ENCODE measurements at regions of chr12 and their contacts with region 1.

Region 1: DNA sequence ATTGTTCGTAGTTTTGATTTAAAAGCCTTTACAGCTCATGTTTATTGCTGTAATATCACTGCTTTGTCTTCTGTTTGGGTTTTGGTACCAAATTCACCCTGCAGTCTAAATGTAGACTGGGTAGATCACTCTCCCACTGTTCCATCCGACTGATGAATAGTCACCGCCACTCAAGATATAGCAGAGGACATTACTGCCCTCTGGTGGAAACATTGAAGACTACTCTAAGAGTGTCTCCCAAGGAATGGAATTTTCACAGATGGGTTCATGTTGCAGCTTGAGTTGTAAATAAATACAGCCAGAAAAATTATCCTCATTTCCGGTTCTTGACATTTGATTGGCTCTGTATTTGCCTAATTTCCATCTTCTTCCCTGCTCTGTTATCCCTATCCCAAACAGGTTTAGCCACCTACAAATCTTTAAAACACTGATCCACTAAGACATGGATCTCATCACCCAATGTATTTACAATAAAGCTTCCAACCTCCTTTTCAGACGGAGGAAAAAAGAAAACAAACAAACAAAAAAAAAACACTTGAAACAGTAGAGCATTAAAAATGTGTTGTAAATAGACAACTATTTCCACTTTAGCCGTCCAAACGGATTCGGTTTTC is 198.3 kb upstream of the CPNE8 start:
- DNase-seq: peak; percentile 83
- H3K4me3 ChIP-seq: no peak overlapping the region
- H3K27ac ChIP-seq: no peak overlapping the region
- H3K4me1 ChIP-seq: no peaks in the 10 kb centered on the region
- H3K27me3 ChIP-seq: no peaks in the 10 kb centered on the region
- CTCF ChIP-seq: peak; percentile 83

Region 2: GRCh38 chr12:38586652-38587243 is 516.9 kb before region 1 on chr12:
- CTCF ChIA-PET with region 1: no interaction called
- POLR2A ChIA-PET with region 1: no interaction called
- intact Hi-C with region 1: loop called (anchors 10 kb)
- DNase-seq: no peak
- H3K4me3 ChIP-seq: no peak overlapping the region
- H3K27ac ChIP-seq: no peak overlapping the region
- H3K4me1 ChIP-seq: no peaks in the 10 kb centered on the region
- H3K27me3 ChIP-seq: no peaks in the 10 kb centered on the region
- CTCF ChIP-seq: no peak

Region 3: DNA sequence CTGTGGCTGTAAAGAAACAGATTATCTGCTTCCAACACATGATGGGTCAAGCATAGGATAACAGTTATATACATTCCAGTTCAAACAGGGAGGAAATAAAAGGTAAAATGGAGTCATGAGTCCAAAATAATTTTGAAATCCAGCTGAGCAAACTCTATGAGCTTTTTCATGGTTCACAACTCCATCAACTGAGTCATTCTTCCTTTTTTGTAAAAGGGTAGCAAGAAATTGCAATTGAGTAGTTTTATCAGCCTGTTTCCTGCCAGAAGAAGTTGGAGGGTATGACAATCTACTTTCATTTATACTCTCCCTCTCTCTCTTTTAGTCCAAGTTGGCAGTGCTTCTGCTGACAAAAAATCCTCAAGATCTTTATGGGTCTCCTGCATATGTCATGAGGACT is 293.8 kb before region 1 on chr12:
- CTCF ChIA-PET with region 1: no interaction called
- POLR2A ChIA-PET with region 1: no interaction called
- intact Hi-C with region 1: no loop called
- DNase-seq: no peak
- H3K4me3 ChIP-seq: no peak overlapping the region
- H3K27ac ChIP-seq: no peak overlapping the region
- H3K4me1 ChIP-seq: no peaks in the 10 kb centered on the region
- H3K27me3 ChIP-seq: no peaks in the 10 kb centered on the region
- CTCF ChIP-seq: no peak

Region 4: DNA sequence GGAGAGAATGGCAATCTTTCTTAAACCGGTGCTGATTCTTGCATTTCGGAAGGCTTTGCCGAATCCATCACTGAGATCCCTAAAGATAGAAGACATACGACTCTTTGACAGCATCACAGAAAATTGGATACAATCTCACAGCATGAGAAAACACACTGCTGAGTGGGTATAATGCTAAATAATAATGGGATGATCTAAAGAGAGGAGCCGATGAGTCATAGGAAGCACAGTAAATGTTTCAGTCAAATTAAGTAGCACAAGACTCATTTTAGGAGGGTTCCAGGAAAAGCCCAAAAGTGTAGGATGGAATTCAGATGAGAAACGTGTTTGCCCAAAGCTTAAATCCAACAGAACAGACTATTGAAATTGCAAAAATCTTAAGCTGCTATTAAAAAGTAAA is 279.9 kb before region 1 on chr12:
- CTCF ChIA-PET with region 1: no interaction called
- POLR2A ChIA-PET with region 1: no interaction called
- intact Hi-C with region 1: loop called (anchors 10 kb)
- DNase-seq: peak; percentile 87
- H3K4me3 ChIP-seq: no peak overlapping the region
- H3K27ac ChIP-seq: no peak overlapping the region
- H3K4me1 ChIP-seq: peaks cover 14% of the 10 kb centered on the region
- H3K27me3 ChIP-seq: no peaks in the 10 kb centered on the region
- CTCF ChIP-seq: no peak

Region 5: GRCh38 chr12:38921025-38921677 is 182.5 kb before region 1 on chr12:
- CTCF ChIA-PET with region 1: interaction called, 9 read pairs
- POLR2A ChIA-PET with region 1: no interaction called
- intact Hi-C with region 1: loop called (anchors 1 kb)
- DNase-seq: peak; percentile 77
- H3K4me3 ChIP-seq: no peak overlapping the region
- H3K27ac ChIP-seq: no peak overlapping the region
- H3K4me1 ChIP-seq: no peaks in the 10 kb centered on the region
- H3K27me3 ChIP-seq: no peaks in the 10 kb centered on the region
- CTCF ChIP-seq: peak; percentile 69

Region 6: GRCh38 chr12:38983117-38983902 is 120.3 kb before region 1 on chr12:
- CTCF ChIA-PET with region 1: no interaction called
- POLR2A ChIA-PET with region 1: no interaction called
- intact Hi-C with region 1: no loop called
- DNase-seq: no peak
- H3K4me3 ChIP-seq: no peak overlapping the region
- H3K27ac ChIP-seq: no peak overlapping the region
- H3K4me1 ChIP-seq: no peaks in the 10 kb centered on the region
- H3K27me3 ChIP-seq: no peaks in the 10 kb centered on the region
- CTCF ChIP-seq: no peak

Region 7: DNA sequence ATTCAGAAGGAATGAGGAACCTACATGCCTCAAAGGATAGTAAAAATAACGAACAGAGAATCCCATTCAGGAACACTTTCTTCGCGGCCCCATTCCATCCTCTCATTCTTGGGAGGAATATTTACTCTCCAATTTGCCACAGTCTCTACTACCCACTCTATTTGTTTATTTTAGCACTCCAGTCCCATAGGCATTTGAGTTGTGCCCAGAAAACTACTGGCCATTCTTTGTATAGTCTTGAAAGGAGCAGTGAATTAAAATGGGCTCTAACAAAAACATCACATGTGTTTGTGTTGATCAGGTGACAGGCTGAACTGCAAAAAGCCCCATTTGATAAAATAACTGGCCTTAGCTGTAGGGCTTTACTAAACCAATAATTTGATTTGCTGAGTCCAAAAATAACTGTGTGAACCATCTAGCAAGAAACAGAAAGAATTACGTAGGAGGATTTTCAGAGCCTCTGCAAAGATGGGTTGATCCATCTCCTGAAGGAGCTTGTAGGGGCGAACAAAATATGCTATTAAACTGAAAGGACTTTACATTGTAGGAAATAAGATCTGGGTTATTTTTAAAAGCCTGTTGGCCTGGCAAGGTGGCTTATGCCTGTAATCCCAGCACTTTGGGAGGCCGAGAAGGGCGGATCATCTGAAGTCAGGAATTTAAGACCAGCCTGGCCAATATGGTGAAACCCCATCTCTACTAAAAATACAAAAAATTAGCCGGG is 56.0 kb before region 1 on chr12:
- CTCF ChIA-PET with region 1: no interaction called
- POLR2A ChIA-PET with region 1: no interaction called
- intact Hi-C with region 1: loop called (anchors 5 kb)
- DNase-seq: no peak
- H3K4me3 ChIP-seq: no peak overlapping the region
- H3K27ac ChIP-seq: no peak overlapping the region
- H3K4me1 ChIP-seq: peaks cover 11% of the 10 kb centered on the region
- H3K27me3 ChIP-seq: no peaks in the 10 kb centered on the region
- CTCF ChIP-seq: no peak

Region 8: GRCh38 chr12:39272871-39273770 is 169.5 kb after region 1 on chr12:
- CTCF ChIA-PET with region 1: interaction called, 12 read pairs
- POLR2A ChIA-PET with region 1: no interaction called
- intact Hi-C with region 1: no loop called
- DNase-seq: peak; percentile 77
- H3K4me3 ChIP-seq: no peak overlapping the region
- H3K27ac ChIP-seq: no peak overlapping the region
- H3K4me1 ChIP-seq: peaks cover 25% of the 10 kb centered on the region
- H3K27me3 ChIP-seq: no peaks in the 10 kb centered on the region
- CTCF ChIP-seq: peak; percentile 80

Region 9: GRCh38 chr12:40714636-40715035 is 1611.0 kb after region 1 on chr12:
- CTCF ChIA-PET with region 1: no interaction called
- POLR2A ChIA-PET with region 1: no interaction called
- intact Hi-C with region 1: no loop called
- DNase-seq: no peak
- H3K4me3 ChIP-seq: no peak overlapping the region
- H3K27ac ChIP-seq: no peak overlapping the region
- H3K4me1 ChIP-seq: no peaks in the 10 kb centered on the region
- H3K27me3 ChIP-seq: no peaks in the 10 kb centered on the region
- CTCF ChIP-seq: no peak